ENCODE measurements at regions of chr10 and their contacts with region 1.

Region 1: GRCh38 chr10:112565434-112566053 is 118.5 kb downstream of the VTI1A start:
- DNase-seq: peak; percentile 61
- H3K4me3 ChIP-seq: no peak overlapping the region
- CTCF ChIP-seq: peak; percentile 77

Region 2: GRCh38 chr10:112519129-112519761 is 46.3 kb before region 1 on chr10:
- in situ Hi-C with region 1: no loop called
- DNase-seq: no peak
- H3K4me3 ChIP-seq: no peak overlapping the region
- CTCF ChIP-seq: no peak

Region 3: DNA sequence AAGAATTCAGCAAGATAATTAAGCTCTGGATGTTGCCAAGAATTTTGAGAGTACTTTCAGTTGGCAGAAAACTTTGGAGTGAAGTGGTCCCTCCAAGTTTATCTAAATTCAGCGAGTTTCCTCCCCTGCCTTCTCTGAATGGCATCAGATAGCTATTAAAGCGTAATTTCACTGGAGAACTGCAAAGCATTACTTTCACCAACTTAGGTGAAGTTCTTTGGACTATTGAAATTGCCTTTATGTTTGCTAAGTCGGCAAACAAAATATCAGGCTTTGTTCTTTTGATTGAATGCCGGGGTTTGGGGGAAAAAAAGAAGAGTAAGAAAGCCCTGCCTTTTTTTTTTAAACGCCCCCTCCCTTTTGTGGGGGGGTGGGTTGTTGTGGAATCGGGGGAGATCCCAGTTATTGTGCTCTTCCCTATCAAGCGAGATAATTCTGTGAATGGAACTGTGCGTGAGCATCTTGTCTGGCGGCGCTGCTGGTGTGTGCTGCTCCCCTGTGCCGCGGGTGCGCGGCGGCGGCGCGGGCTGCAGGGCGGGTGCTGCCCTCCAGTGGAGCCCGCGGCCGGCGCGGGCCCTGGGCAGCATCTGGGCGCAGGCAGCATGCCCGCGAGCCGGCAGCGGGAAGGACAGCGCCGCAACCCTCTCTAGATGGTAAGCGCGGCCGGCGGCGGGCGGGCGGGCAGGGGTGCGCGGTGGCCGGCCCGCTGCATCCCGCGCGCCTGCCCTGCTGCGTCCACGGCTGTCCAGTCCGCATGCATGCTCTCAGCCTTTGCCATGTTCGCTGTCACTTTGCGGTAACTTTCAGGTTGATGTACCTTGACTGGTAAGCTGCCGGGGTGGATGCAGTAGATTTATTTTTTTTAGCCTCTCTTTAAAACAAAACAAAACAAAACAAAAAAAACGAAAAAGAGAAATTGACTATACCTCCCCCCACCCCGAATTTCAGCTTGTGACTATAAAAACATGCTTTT is 561.0 kb after region 1 on chr10:
- in situ Hi-C with region 1: loop called (anchors 25 kb)
- DNase-seq: peak; percentile 39
- H3K4me3 ChIP-seq: peak overlapping the region; percentile 35
- CTCF ChIP-seq: peak; percentile 40